CD4-positive, alpha-beta T cell (primary cell): ENCODE measurements at regions of chr10 and their contacts with region 1.

Region 1: DNA sequence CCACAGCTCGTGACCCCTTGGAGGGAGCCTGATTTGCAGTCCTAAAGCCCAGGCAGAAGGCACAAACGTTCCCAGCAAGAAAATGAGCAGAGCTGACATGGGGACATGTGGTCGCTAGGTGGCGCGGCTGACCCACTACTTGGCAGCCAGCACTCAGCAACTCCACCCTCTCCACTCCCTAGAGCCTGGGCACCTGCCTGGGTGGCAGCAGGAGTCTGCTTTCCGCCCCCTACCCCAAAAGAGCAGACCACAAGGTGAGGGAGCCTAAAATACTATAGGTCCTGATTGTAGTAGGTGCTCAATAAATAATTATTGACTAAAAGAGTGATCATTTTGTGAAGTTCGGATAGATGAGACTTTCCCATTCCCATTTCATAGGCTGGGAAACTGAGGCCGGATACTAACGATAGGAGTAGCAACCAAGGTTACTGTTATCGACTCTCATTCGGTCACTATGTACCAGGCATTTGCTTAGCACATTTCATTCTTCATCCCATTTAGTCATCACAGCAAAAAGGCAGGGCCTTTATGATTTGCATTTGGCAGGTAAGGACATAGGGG is 57.4 kb downstream of the NEUROG3 start:
- DNase-seq: peak; percentile 71 to 90 (median 76)
- ATAC-seq: peak; percentile 99
- H3K4me3 ChIP-seq: no peak overlapping the region
- H3K4me3 Mint-ChIP-seq: no peak overlapping the region
- H3K27ac ChIP-seq: no peak overlapping the region
- H3K27ac Mint-ChIP-seq: no peak overlapping the region
- H3K4me1 ChIP-seq: no peaks in the 10 kb centered on the region
- H3K4me1 Mint-ChIP-seq: no peaks in the 10 kb centered on the region
- H3K27me3 ChIP-seq: no peaks in the 10 kb centered on the region
- H3K27me3 Mint-ChIP-seq: peaks cover 36% of the 10 kb centered on the region
- CTCF ChIP-seq: peak; percentile 82

Region 2: DNA sequence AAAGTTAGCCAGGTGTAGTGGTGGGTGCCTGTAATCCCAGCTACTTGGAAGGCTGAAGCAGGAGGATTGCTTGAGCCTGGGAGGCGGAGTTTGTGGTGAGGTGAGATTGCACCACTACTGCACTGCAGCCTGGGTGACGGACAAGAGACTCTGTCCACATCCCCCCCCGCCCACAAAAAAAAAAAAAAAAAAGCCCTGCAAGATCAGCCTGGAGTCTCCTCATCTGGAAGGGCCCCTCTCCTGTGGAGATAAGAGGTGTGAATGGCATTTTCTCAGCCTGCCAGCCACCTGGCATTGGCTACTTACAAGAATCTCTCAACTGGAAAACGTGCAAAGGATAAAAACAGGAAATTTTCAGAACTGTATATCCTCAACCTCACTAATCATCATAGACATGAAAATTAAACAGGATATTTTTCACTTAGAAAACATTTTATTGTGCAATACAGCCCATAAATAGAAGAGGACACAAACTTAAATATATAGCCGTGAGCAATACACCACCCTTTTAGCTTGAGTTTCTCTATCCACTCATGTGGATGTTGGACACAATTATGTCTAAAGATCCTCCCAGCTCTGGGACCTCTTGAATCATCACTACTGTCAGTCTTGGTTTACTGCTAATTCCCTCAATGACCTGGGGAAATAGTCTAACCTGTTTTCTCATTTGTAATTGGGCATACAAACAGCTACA is 75.8 kb before region 1 on chr10:
- CTCF ChIA-PET with region 1: no interaction called
- POLR2A ChIA-PET with region 1: no interaction called
- intact Hi-C with region 1: no loop called
- DNase-seq: no peak
- ATAC-seq: no peak
- H3K4me3 ChIP-seq: no peak overlapping the region
- H3K4me3 Mint-ChIP-seq: no peak overlapping the region
- H3K27ac ChIP-seq: no peak overlapping the region
- H3K27ac Mint-ChIP-seq: no peak overlapping the region
- H3K4me1 ChIP-seq: no peaks in the 10 kb centered on the region
- H3K4me1 Mint-ChIP-seq: no peaks in the 10 kb centered on the region
- H3K27me3 ChIP-seq: no peaks in the 10 kb centered on the region
- H3K27me3 Mint-ChIP-seq: peaks cover 24% of the 10 kb centered on the region
- CTCF ChIP-seq: no peak

Region 3: GRCh38 chr10:69684020-69684980 is 168.5 kb after region 1 on chr10:
- CTCF ChIA-PET with region 1: no interaction called
- POLR2A ChIA-PET with region 1: no interaction called
- intact Hi-C with region 1: no loop called
- DNase-seq: no peak
- ATAC-seq: no peak
- H3K4me3 ChIP-seq: no peak overlapping the region
- H3K4me3 Mint-ChIP-seq: no peak overlapping the region
- H3K27ac ChIP-seq: no peak overlapping the region
- H3K27ac Mint-ChIP-seq: no peak overlapping the region
- H3K4me1 ChIP-seq: no peaks in the 10 kb centered on the region
- H3K4me1 Mint-ChIP-seq: no peaks in the 10 kb centered on the region
- H3K27me3 ChIP-seq: peaks cover 0 to 4% of the 10 kb centered on the region in 2 experiments
- H3K27me3 Mint-ChIP-seq: peaks cover 22% of the 10 kb centered on the region
- CTCF ChIP-seq: no peak

Region 4: GRCh38 chr10:69716711-69717560 is 201.2 kb after region 1 on chr10:
- CTCF ChIA-PET with region 1: no interaction called
- POLR2A ChIA-PET with region 1: no interaction called
- intact Hi-C with region 1: loop called (anchors 2 kb)
- DNase-seq: peak; percentile 29 to 69 (median 40)
- ATAC-seq: no peak
- H3K4me3 ChIP-seq: no peak overlapping the region
- H3K4me3 Mint-ChIP-seq: no peak overlapping the region
- H3K27ac ChIP-seq: no peak overlapping the region
- H3K27ac Mint-ChIP-seq: no peak overlapping the region
- H3K4me1 ChIP-seq: no peaks in the 10 kb centered on the region
- H3K4me1 Mint-ChIP-seq: no peaks in the 10 kb centered on the region
- H3K27me3 ChIP-seq: peaks cover under 1 to 5% of the 10 kb centered on the region in 2 experiments
- H3K27me3 Mint-ChIP-seq: peaks cover 7% of the 10 kb centered on the region
- CTCF ChIP-seq: peak; percentile 65

Region 5: GRCh38 chr10:69914398-69915214 is 398.8 kb after region 1 on chr10:
- CTCF ChIA-PET with region 1: no interaction called
- POLR2A ChIA-PET with region 1: no interaction called
- intact Hi-C with region 1: loop called (anchors 2 to 10 kb)
- DNase-seq: peak; percentile 14 to 64 (median 34)
- ATAC-seq: peak; percentile 66
- H3K4me3 ChIP-seq: no peak overlapping the region
- H3K4me3 Mint-ChIP-seq: no peak overlapping the region
- H3K27ac ChIP-seq: no peak overlapping the region
- H3K27ac Mint-ChIP-seq: no peak overlapping the region
- H3K4me1 ChIP-seq: peaks cover 4% of the 10 kb centered on the region
- H3K4me1 Mint-ChIP-seq: no peaks in the 10 kb centered on the region
- H3K27me3 ChIP-seq: no peaks in the 10 kb centered on the region
- H3K27me3 Mint-ChIP-seq: peaks cover 8% of the 10 kb centered on the region
- CTCF ChIP-seq: peak; percentile 69